IMR-90 (cell line): ENCODE measurements at regions of chr1 and their contacts with region 1.

Region 1: GRCh38 chr1:224454397-224455066 is 19.9 kb upstream of the WDR26 start:
- DNase-seq: no peak
- ATAC-seq: no peak
- H3K4me3 ChIP-seq: no peak overlapping the region
- H3K27ac ChIP-seq: no peak overlapping the region
- H3K4me1 ChIP-seq: peaks cover 7% of the 10 kb centered on the region
- H3K27me3 ChIP-seq: no peaks in the 10 kb centered on the region
- CTCF ChIP-seq: no peak
- POLR2A ChIP-seq: no peak
- RAD21 ChIP-seq: no peak

Region 2: DNA sequence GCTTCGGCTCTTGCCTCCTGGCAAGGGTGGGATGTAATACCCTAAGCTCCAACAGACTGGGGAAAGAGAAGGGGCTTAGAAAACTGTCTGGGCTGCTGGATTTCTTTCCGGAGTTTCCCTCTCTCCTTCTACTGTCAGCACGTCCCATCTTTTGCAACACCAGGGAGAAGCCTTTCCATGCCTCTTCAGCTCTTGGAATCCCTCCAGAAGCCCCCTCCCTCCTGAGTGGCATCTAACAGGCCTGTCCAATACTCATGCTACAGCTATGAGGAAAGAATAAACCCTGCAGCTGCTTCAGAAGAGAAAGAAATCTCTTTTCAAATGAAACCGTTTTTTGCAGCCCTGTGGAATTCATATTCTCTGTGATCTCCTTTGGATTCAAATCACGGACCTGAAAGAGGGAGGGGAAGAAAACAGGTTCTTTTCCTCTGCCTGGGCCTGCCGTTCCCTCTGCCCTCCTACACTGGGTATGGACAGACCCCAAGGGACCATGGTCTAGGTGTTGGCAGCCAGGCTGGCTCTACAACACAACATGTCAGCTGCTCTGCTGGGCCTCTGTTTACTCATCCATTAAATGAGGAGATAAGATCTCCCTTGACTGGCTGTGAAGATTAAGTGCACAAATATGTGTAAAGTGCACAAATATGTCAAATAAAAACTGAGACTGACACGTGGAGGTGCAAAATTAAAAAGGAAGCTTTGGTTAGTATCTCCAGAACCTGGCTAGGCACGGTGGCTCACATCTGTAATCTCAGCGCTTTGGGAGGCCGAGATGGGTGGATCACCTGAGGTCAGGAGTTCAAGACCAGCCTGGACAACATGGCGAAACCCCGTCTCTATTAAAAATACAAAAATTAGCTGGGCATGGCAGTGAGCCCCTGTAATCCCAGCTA is 748.2 kb before region 1 on chr1:
- CTCF ChIA-PET with region 1: no interaction called
- POLR2A ChIA-PET with region 1: no interaction called
- dilution Hi-C with region 1: no loop called
- in situ Hi-C with region 1: no loop called
- intact Hi-C with region 1: no loop called
- DNase-seq: peak; percentile 96
- ATAC-seq: peak; percentile 8
- H3K4me3 ChIP-seq: no peak overlapping the region
- H3K27ac ChIP-seq: peak overlapping the region; percentile 99
- H3K4me1 ChIP-seq: peaks cover 37% of the 10 kb centered on the region
- H3K27me3 ChIP-seq: no peaks in the 10 kb centered on the region
- CTCF ChIP-seq: no peak
- POLR2A ChIP-seq: no peak
- RAD21 ChIP-seq: no peak

Region 3: GRCh38 chr1:224113918-224114786 is 340.4 kb before region 1 on chr1 and contains the start of gene FBXO28:
- CTCF ChIA-PET with region 1: no interaction called
- POLR2A ChIA-PET with region 1: no interaction called
- dilution Hi-C with region 1: no loop called
- in situ Hi-C with region 1: no loop called
- intact Hi-C with region 1: loop called (anchors 10 kb)
- DNase-seq: peak; percentile 95
- ATAC-seq: peak; percentile 98
- H3K4me3 ChIP-seq: peak within 1 kb of the TSS; percentile 75
- H3K27ac ChIP-seq: peak within 1 kb of the TSS; percentile 72
- H3K4me1 ChIP-seq: no peaks in the 10 kb centered on the region
- H3K27me3 ChIP-seq: no peaks in the 10 kb centered on the region
- CTCF ChIP-seq: no peak
- POLR2A ChIP-seq: peak; percentile 90
- RAD21 ChIP-seq: no peak
- total RNA-seq, gene FBXO28: 22.6 and 30.0 TPM in 2 replicates

Region 4: DNA sequence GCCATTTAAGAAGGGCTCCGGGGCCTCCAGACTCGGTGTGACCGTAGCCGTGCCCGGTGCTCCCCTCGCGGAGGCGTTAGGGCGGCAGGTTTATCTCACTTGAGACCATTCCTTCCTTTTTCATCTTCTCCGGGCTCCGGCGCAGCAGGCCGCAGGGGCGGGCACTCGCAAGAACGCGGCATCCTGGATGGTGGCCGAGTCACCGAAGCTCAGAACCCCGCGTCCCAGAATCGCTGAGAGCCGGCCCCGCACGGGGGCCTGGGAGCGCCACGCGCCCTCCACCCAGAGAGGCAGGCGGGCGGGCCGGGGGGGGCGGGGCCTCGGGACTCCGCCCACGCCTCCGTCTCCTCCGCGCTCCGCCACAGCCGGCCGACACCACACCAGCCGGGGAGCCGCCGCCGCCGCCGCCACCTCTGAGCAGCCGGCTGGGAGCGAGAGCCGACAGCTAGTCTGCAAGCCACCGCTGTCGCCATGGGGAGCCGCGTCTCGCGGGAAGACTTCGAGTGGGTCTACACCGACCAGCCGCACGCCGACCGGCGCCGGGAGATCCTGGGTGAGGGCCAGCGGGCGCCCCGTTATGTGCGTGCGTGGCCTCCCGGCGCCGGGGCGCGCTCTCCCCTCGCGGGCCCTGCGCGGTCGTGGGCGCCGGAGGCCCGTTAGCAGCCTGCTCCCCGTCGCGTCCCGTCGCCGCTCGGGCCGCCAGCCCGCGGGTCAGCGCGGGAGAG is 271.5 kb before region 1 on chr1 and contains the start of gene DEGS1:
- CTCF ChIA-PET with region 1: no interaction called
- POLR2A ChIA-PET with region 1: interaction called, 10 read pairs
- dilution Hi-C with region 1: no loop called
- in situ Hi-C with region 1: no loop called
- intact Hi-C with region 1: no loop called
- DNase-seq: peak; percentile 73
- ATAC-seq: peak; percentile 94
- H3K4me3 ChIP-seq: peak within 1 kb of the TSS; percentile 98
- H3K27ac ChIP-seq: peak within 1 kb of the TSS; percentile 96
- H3K4me1 ChIP-seq: 0 out of 2 replicates have a peak, but pooled peaks cover 4% of the 10 kb centered on the region
- H3K27me3 ChIP-seq: no peaks in the 10 kb centered on the region
- CTCF ChIP-seq: no peak
- POLR2A ChIP-seq: peak; percentile 83
- RAD21 ChIP-seq: no peak
- total RNA-seq, gene DEGS1: 54.8 and 123 TPM in 2 replicates

Region 5: DNA sequence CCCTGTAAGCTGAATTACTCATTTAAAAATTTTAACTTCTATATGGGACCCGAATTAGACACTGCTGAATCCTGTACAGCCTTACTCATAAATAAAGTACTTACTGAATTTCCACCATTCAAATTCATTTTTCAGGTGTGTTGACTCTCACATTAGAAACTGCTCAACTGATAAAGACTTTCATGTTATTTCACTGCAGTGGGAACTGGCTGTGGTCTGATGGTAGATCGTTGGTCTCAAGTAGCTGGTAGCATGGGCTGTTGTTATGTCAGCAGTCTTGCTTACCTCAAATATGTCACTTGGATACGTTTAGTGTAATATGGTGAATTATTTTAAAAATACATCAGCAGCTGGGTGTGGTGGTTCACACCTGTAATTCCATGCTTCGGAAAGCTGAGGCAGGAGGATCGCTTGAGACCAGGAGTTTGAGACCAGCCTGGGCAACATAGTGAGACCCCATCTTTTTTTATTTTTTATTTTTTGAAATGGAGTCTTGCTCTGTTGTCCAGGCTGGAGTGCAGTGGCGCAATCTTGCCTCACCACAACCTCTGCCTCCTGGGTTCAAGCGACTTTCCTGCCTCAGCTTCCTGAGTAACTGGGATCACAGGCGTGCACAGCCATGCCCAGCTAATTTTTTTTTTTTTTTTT is 261.1 kb before region 1 on chr1:
- CTCF ChIA-PET with region 1: no interaction called
- POLR2A ChIA-PET with region 1: no interaction called
- dilution Hi-C with region 1: no loop called
- in situ Hi-C with region 1: no loop called
- intact Hi-C with region 1: no loop called
- DNase-seq: no peak
- ATAC-seq: no peak
- H3K4me3 ChIP-seq: no peak overlapping the region
- H3K27ac ChIP-seq: no peak overlapping the region
- H3K4me1 ChIP-seq: peaks cover 2% of the 10 kb centered on the region; the same call in 1 of the 2 replicates
- H3K27me3 ChIP-seq: no peaks in the 10 kb centered on the region
- CTCF ChIP-seq: no peak
- POLR2A ChIP-seq: no peak
- RAD21 ChIP-seq: no peak

Region 6: GRCh38 chr1:224392411-224393249 is 61.9 kb before region 1 on chr1:
- CTCF ChIA-PET with region 1: interaction called, 13 read pairs
- POLR2A ChIA-PET with region 1: no interaction called
- dilution Hi-C with region 1: no loop called
- in situ Hi-C with region 1: no loop called
- intact Hi-C with region 1: no loop called
- DNase-seq: peak; percentile 70
- ATAC-seq: peak; percentile 87
- H3K4me3 ChIP-seq: no peak overlapping the region
- H3K27ac ChIP-seq: peak overlapping the region; percentile 5; the same call in 1 of the 2 replicates
- H3K4me1 ChIP-seq: no peaks in the 10 kb centered on the region
- H3K27me3 ChIP-seq: no peaks in the 10 kb centered on the region
- CTCF ChIP-seq: no peak
- POLR2A ChIP-seq: no peak
- RAD21 ChIP-seq: no peak

Region 7: DNA sequence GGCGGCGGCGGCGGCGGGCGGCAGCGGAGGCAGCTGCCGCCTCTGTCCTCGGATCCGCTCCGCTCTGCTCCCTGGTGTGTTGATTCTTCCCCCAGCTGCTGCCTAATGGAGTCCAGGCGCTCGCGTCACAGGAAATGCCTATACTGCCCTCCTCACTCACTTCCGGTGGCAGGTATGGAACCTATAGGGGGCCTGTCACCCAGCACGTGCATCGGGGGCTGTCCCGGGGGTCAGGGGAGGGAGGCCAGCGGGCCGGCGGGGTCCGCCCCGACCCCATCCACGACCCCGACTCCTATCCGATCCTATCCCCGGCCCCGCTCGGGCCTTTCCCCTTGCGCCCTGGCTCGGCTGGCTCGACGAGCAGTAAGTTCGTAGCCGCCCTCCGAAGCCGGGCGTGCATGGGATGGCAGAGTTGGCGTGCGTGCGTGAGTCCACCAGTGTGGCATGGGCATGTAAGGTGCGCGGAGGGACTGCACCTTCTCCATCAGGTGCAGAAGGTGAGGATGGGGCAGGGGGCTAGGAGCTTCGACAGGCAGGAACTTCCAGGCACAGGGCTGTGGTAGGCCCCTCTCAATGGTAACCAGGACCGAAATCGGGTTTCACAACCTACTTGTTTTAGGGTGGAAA is 19.7 kb before region 1 on chr1 and contains the start of gene WDR26:
- CTCF ChIA-PET with region 1: interaction called, 8 read pairs
- POLR2A ChIA-PET with region 1: interaction called, 3 read pairs
- dilution Hi-C with region 1: no loop called
- in situ Hi-C with region 1: no loop called
- intact Hi-C with region 1: loop called (anchors 1 kb)
- DNase-seq: peak; percentile 80
- ATAC-seq: peak; percentile 74
- H3K4me3 ChIP-seq: peak within 1 kb of the TSS; percentile 77
- H3K27ac ChIP-seq: peak within 1 kb of the TSS; percentile 99
- H3K4me1 ChIP-seq: peaks cover 4% of the 10 kb centered on the region; the same call in 1 of the 2 replicates
- H3K27me3 ChIP-seq: no peaks in the 10 kb centered on the region
- CTCF ChIP-seq: 0 out of 2 replicates have a peak, but pooled peaks have one; percentile 8
- POLR2A ChIP-seq: peak; percentile 90
- RAD21 ChIP-seq: no peak
- total RNA-seq, gene WDR26: 23.8 and 41.4 TPM in 2 replicates

Region 8: DNA sequence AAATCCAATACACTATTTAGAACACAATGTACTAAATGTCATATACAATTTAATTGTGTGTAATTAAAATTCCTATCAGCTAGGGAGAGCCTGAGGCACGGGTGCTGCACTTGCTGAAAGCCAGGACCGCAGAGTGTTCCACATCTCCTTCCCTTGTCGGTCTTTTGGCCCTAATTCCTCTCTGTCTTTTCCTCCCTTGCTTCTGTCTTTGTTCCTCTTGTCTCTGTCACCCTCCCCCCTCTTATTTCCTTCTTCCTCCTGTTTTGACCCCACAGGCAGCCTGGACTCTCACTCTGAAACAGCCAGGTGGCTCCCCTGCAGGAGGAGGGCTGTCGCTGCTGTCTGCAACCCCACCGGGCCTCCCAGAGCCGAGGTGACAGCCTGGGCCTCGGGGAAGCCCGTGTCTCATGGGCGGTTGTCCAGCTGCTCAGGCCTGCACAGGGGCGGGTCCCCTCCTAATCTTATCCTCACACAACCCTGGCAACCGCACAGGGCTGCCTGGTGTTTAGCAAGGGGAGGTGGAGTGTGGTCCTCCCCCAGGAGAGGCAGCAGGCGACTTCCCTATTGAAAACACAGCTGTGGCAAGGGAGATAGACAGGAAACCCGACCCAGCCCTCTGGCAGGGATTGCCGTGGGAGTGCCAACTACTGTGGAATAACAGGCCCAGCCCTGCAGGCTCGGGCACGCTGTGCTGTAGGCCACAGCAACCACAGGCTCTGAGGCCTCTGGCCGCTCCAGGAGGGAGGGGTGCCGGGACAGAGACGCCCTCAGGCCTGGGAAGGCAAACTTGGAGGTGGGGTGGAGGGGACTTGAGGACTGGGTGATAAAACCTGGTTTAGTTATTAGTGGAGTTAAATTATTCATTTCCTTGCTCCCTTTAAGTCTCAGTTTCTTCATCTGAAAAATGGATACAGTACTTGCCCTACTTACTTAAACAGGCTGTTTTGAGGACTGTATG is 48.9 kb after region 1 on chr1:
- CTCF ChIA-PET with region 1: interaction called, 8 read pairs
- POLR2A ChIA-PET with region 1: interaction called, 9 read pairs
- dilution Hi-C with region 1: no loop called
- in situ Hi-C with region 1: no loop called
- intact Hi-C with region 1: loop called (anchors 2 kb)
- DNase-seq: peak; percentile 80
- ATAC-seq: peak; percentile 74
- H3K4me3 ChIP-seq: no peak overlapping the region
- H3K27ac ChIP-seq: peak overlapping the region; percentile 96
- H3K4me1 ChIP-seq: peaks cover 29% of the 10 kb centered on the region
- H3K27me3 ChIP-seq: no peaks in the 10 kb centered on the region
- CTCF ChIP-seq: no peak
- POLR2A ChIP-seq: no peak
- RAD21 ChIP-seq: no peak

Region 9: GRCh38 chr1:224644553-224645154 is 190.1 kb after region 1 on chr1:
- CTCF ChIA-PET with region 1: no interaction called
- POLR2A ChIA-PET with region 1: no interaction called
- dilution Hi-C with region 1: no loop called
- in situ Hi-C with region 1: no loop called
- intact Hi-C with region 1: no loop called
- DNase-seq: peak; percentile 55
- ATAC-seq: peak; percentile 96
- H3K4me3 ChIP-seq: no peak overlapping the region
- H3K27ac ChIP-seq: no peak overlapping the region
- H3K4me1 ChIP-seq: peaks cover 6% of the 10 kb centered on the region; the same call in 1 of the 2 replicates
- H3K27me3 ChIP-seq: no peaks in the 10 kb centered on the region
- CTCF ChIP-seq: peak; percentile 74
- POLR2A ChIP-seq: no peak
- RAD21 ChIP-seq: peak; percentile 65